ENCODE measurements at regions of chr14 and their contacts with region 1.

Region 1: GRCh38 chr14:60349663-60350365 is 100.8 kb downstream of the PPM1A start:
- DNase-seq: peak; percentile 58
- CTCF ChIP-seq: peak; percentile 58

Region 2: DNA sequence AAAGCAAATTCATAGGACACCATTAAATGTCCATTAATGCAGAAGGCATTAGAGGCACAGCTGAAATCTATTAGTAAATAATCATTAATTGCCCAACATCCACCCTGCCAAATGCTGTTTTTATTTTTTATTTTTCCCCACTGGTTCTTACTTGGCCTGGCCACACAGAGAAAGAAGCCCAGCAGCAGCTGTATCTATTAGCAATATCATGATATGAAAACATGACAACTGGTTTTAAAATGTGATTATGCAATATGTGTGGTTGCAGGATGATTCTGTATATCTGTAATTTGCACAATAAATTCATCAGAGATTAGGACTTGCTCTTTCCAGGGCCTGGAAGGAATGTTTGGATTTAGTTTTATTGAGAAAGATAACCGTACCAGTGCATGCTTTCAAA is 204.0 kb after region 1 on chr14:
- in situ Hi-C with region 1: loop called (anchors 10 kb)
- DNase-seq: no peak
- CTCF ChIP-seq: no peak

Region 3: GRCh38 chr14:60585676-60586075 is 235.9 kb after region 1 on chr14:
- in situ Hi-C with region 1: no loop called
- DNase-seq: no peak
- CTCF ChIP-seq: no peak